HCT116 (cell line): ENCODE measurements at regions of chr4 and their contacts with region 1.

Region 1: GRCh38 chr4:9762823-9763475 is 18.5 kb upstream of the DRD5 start:
- DNase-seq: peak; percentile 70
- ATAC-seq: peak; percentile 72
- H3K4me3 ChIP-seq: no peak overlapping the region
- H3K27ac ChIP-seq: no peak overlapping the region
- H3K4me1 ChIP-seq: no peaks in the 10 kb centered on the region
- H3K27me3 ChIP-seq: 0 out of 2 replicates have a peak, but pooled peaks cover 3% of the 10 kb centered on the region
- CTCF ChIP-seq: peak; percentile 66 to 89 (median 75)
- POLR2A ChIP-seq: no peak
- RAD21 ChIP-seq: peak; percentile 91

Region 2: DNA sequence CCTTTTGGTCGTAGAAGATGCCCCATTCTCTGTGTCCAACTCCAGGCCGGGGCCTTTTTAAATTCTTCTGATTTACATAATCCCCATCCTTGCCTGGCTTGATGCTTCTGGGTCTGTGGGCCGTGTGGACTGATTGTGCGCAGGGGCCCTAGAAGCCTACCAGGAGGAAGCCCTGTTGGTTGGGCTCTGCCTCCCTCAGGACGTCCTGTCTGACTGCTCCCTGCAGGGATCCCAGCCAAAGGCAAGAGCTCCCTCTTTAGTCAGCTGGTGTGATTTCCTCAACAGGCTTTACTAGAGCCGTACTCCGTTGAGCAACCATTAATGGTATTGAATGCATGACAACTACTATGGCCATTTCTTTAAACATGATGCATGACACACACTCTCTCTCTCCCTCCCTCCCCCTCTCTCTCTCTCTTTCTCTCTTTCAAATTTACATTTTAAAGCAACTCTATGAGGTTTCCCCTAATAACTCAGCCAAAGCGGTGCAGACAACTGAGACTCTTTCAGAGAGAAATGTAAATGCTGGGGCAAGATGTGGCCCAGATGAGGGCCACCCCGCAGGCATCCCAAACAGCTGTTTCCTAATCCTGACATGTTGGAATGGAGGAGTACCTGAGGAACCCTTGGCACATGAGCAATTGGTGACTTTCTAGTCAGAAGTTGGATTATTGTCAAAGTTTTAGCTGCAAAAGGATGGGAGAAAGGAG is 135.8 kb after region 1 on chr4:
- CTCF ChIA-PET with region 1: interaction called, 17 read pairs
- POLR2A ChIA-PET with region 1: no interaction called
- RAD21 ChIA-PET with region 1: interaction called in 1 of 2 experiments, 7 read pairs
- intact Hi-C with region 1: loop called (anchors 1 kb)
- DNase-seq: peak; percentile 35
- ATAC-seq: peak; percentile 98
- H3K4me3 ChIP-seq: no peak overlapping the region
- H3K27ac ChIP-seq: no peak overlapping the region
- H3K4me1 ChIP-seq: no peaks in the 10 kb centered on the region
- H3K27me3 ChIP-seq: no peaks in the 10 kb centered on the region
- CTCF ChIP-seq: peak; percentile 48 to 72 (median 50)
- POLR2A ChIP-seq: no peak
- RAD21 ChIP-seq: peak; percentile 72

Region 3: DNA sequence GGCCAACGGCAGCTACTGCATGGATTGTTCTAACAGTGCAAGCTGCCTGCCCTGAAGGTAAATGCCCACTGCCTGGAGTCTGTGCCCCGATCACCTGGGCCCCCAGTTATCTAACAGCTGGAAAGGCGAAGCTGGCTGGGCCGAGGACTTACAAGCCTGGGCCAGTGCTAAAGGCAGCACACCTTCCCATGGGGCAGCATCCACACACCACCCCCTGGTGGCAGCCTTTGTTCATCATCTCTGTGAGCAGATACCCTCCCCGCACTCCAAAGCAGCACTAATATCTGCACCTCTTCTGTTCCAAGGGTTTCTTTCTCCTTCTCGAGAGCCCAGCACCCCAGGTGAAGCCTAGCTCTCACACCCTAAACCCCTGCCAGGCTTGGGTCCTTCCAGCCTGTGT is 250.8 kb after region 1 on chr4:
- CTCF ChIA-PET with region 1: interaction called, 59 read pairs
- POLR2A ChIA-PET with region 1: no interaction called
- RAD21 ChIA-PET with region 1: interaction called, 6 to 9 read pairs
- intact Hi-C with region 1: loop called (anchors 1 kb)
- DNase-seq: peak; percentile 18
- ATAC-seq: peak; percentile 72
- H3K4me3 ChIP-seq: no peak overlapping the region
- H3K27ac ChIP-seq: no peak overlapping the region
- H3K4me1 ChIP-seq: peaks cover 0 to 11% of the 10 kb centered on the region in 2 experiments; a peak in 1 of 4 replicates
- H3K27me3 ChIP-seq: no peaks in the 10 kb centered on the region
- CTCF ChIP-seq: peak in 2 of 3 experiments; percentile 65 to 73; a peak in 4 of 6 replicates
- POLR2A ChIP-seq: no peak
- RAD21 ChIP-seq: no peak